ENCODE measurements at regions of chr19 and their contacts with region 1.

Region 1: GRCh38 chr19:41310033-41310758 is at the start of gene CCDC97:
- DNase-seq: peak; percentile 84 to 87 (median 86)
- H3K4me3 ChIP-seq: peak within 1 kb of the TSS; percentile 84 to 85 (median 85)
- H3K4me3 Mint-ChIP-seq: peak within 1 kb of the TSS; percentile 95 to 99
- H3K27ac ChIP-seq: peak within 1 kb of the TSS; percentile 83 to 95
- H3K27ac Mint-ChIP-seq: peak within 1 kb of the TSS; percentile 97 to 100 (median 99)
- H3K4me1 ChIP-seq: peaks cover 50 to 64% of the 10 kb centered on the region in 2 donors
- H3K4me1 Mint-ChIP-seq: peaks cover 69% of the 10 kb centered on the region
- H3K27me3 ChIP-seq: no peaks in the 10 kb centered on the region
- H3K27me3 Mint-ChIP-seq: no peaks in the 10 kb centered on the region
- CTCF ChIP-seq: no peak
- polyA plus RNA-seq, gene CCDC97: 6.1 to 13.0 (median 8.8) TPM

Region 2: GRCh38 chr19:40974633-40975037 is 335.6 kb before region 1 on chr19:
- intact Hi-C with region 1: loop called (anchors 5 kb)
- DNase-seq: peak; percentile 62 to 73 (median 70)
- H3K4me3 ChIP-seq: no peak overlapping the region
- H3K4me3 Mint-ChIP-seq: no peak overlapping the region
- H3K27ac ChIP-seq: no peak overlapping the region
- H3K27ac Mint-ChIP-seq: no peak overlapping the region
- H3K4me1 ChIP-seq: no peaks in the 10 kb centered on the region
- H3K4me1 Mint-ChIP-seq: no peaks in the 10 kb centered on the region
- H3K27me3 ChIP-seq: no peaks in the 10 kb centered on the region
- H3K27me3 Mint-ChIP-seq: peaks cover 12 to 20% (median 13%) of the 10 kb centered on the region in 3 donors
- CTCF ChIP-seq: peak; percentile 95

Region 3: GRCh38 chr19:41133260-41133659 is 176.9 kb before region 1 on chr19:
- intact Hi-C with region 1: loop called in 1 of 2 experiments (anchors 10 kb)
- DNase-seq: no peak
- H3K4me3 ChIP-seq: no peak overlapping the region
- H3K4me3 Mint-ChIP-seq: peak overlapping the region; percentile 58 to 62
- H3K27ac ChIP-seq: no peak overlapping the region
- H3K27ac Mint-ChIP-seq: peak overlapping the region in 1 of 7 donors; percentile 41
- H3K4me1 ChIP-seq: peaks cover 11 to 20% of the 10 kb centered on the region in 2 donors
- H3K4me1 Mint-ChIP-seq: peaks cover 18% of the 10 kb centered on the region
- H3K27me3 ChIP-seq: peaks cover 0 to 7% of the 10 kb centered on the region in 2 donors
- H3K27me3 Mint-ChIP-seq: peaks cover 38 to 45% (median 41%) of the 10 kb centered on the region in 3 donors
- CTCF ChIP-seq: no peak

Region 4: DNA sequence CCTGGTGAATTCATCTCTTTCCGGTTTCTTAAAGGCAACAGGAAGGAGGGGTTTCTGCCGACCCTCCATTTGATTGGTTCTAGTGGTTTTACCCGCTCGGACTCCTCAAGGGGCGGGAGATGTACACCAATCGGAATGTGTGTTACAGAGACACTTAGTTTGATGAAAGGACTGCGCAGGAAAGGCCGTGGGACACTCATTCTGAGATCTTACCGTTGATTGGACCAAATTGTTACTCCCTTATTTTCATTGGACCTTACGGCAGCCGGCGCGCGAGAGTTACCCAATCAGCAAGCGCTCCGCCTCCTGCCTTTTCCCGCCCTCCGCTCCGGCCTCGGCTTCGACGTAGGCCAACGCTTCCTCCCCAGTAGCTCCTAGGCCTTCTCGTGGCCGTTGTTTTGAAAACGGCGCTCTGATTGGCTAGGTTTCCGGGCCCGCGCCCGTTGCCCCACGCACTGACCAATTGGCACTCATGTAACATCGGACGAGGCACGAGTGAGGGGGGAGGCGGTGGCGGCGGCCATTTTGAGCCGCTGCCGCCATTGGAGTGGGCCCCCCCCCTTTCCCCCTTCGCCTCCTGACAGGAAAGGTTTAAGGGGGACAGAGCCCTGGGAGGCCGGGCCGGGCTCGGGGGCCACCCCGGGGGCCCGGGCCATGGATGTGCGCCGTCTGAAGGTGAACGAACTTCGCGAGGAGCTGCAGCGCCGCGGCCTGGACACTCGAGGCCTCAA is 46.2 kb before region 1 on chr19 and contains the start of gene HNRNPUL1:
- intact Hi-C with region 1: loop called (anchors 5 kb)
- DNase-seq: peak; percentile 100
- H3K4me3 ChIP-seq: peak within 1 kb of the TSS; percentile 79 to 91 (median 84)
- H3K4me3 Mint-ChIP-seq: peak within 1 kb of the TSS; percentile 96 to 97
- H3K27ac ChIP-seq: peak within 1 kb of the TSS; percentile 99 to 100
- H3K27ac Mint-ChIP-seq: peak within 1 kb of the TSS; percentile 99 to 100 (median 100)
- H3K4me1 ChIP-seq: peaks cover 33 to 37% of the 10 kb centered on the region in 2 donors
- H3K4me1 Mint-ChIP-seq: peaks cover 37% of the 10 kb centered on the region
- H3K27me3 ChIP-seq: peaks cover 0 to 5% of the 10 kb centered on the region in 2 donors
- H3K27me3 Mint-ChIP-seq: peaks cover 4 to 13% (median 9%) of the 10 kb centered on the region in 3 donors
- CTCF ChIP-seq: peak; percentile 40
- polyA plus RNA-seq, gene HNRNPUL1: 22.6 to 55.3 (median 30.3) TPM

Region 5: GRCh38 chr19:41353466-41354342 is 43.5 kb after region 1 on chr19 and contains the start of gene TGFB1:
- intact Hi-C with region 1: loop called (anchors 5 kb)
- DNase-seq: peak; percentile 88 to 94 (median 94)
- H3K4me3 ChIP-seq: peak within 1 kb of the TSS; percentile 89 to 97 (median 95)
- H3K4me3 Mint-ChIP-seq: peak within 1 kb of the TSS; percentile 94 to 100
- H3K27ac ChIP-seq: peak within 1 kb of the TSS; percentile 56 to 88
- H3K27ac Mint-ChIP-seq: peak within 1 kb of the TSS; percentile 91 to 98 (median 96)
- H3K4me1 ChIP-seq: peaks cover 70 to 73% of the 10 kb centered on the region in 2 donors
- H3K4me1 Mint-ChIP-seq: peaks cover 71% of the 10 kb centered on the region
- H3K27me3 ChIP-seq: no peaks in the 10 kb centered on the region
- H3K27me3 Mint-ChIP-seq: peaks cover 0 to 1% (median 0%) of the 10 kb centered on the region in 3 donors
- CTCF ChIP-seq: peak; percentile 93
- polyA plus RNA-seq, gene TGFB1: 30.6 to 138 (median 42.2) TPM

Measured in CD14-positive monocyte (primary cell).